ENCODE measurements at regions of chr1 and their contacts with region 1.

Region 1: GRCh38 chr1:145918144-145918992 is at the start of gene PEX11B:
- DNase-seq: peak; percentile 94 to 95 (median 94)
- ATAC-seq: peak; percentile 96
- H3K4me3 ChIP-seq: peak within 1 kb of the TSS; percentile 70
- H3K4me1 ChIP-seq: peaks cover 22% of the 10 kb centered on the region
- CTCF ChIP-seq: no peak
- total RNA-seq, gene PEX11B: 25.5 to 34.8 (median 33.3) TPM

Region 2: DNA sequence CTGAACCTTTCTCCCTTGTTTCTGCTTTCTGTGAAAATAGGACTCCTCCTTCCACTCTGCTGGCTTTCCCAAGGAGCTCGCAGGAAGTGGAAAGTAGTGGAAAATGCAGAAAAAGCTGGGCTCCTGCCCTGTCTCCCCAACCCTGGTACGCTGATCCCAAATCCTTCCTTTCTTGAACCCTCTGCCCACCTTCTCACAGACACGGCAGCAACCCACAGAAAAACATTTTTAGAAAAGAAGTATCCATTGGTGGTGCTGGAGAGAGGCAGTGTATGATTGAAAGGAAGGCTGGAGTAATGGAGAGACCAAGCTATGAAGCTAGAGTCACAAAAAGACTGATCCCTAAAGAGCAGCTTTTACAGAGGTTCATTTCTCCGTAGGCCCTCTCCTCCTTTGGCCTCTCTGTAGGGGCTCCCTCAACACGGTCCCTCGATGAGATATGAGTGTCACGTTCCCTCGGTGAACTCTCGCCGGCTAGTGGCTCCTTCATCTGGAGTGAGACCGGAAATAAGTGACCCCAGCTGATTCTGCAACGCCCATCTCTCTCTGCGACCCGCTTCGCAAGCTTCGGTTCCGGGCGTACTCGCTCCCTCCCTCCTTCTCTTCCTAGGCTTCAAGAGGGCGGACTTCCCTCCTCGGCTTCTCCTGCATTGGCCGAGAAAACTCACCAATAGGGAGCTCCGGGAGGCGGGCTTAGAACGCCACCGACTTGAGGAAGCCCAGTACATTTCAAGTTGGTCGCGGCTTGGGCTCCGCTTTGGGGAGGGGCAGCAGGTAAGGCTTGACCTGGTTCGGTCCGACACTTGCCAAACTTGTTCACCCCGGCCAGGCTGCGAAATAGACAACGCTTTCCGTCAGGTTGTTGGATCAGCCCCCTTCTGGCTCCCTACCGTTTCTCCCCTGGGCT is 45.9 kb after region 1 on chr1 and contains the starts of genes ANKRD34A and POLR3GL:
- intact Hi-C with region 1: loop called in 1 of 2 experiments (anchors 10 kb)
- DNase-seq: peak; percentile 96 to 98 (median 98)
- ATAC-seq: peak; percentile 94
- H3K4me3 ChIP-seq: peak within 1 kb of the TSS; percentile 16
- H3K4me1 ChIP-seq: peaks cover 39% of the 10 kb centered on the region
- CTCF ChIP-seq: no peak
- total RNA-seq, gene ANKRD34A: 0.14 to 0.63 (median 0.41) TPM
- total RNA-seq, gene POLR3GL: 15.7 to 26.8 (median 19.5) TPM

Region 3: DNA sequence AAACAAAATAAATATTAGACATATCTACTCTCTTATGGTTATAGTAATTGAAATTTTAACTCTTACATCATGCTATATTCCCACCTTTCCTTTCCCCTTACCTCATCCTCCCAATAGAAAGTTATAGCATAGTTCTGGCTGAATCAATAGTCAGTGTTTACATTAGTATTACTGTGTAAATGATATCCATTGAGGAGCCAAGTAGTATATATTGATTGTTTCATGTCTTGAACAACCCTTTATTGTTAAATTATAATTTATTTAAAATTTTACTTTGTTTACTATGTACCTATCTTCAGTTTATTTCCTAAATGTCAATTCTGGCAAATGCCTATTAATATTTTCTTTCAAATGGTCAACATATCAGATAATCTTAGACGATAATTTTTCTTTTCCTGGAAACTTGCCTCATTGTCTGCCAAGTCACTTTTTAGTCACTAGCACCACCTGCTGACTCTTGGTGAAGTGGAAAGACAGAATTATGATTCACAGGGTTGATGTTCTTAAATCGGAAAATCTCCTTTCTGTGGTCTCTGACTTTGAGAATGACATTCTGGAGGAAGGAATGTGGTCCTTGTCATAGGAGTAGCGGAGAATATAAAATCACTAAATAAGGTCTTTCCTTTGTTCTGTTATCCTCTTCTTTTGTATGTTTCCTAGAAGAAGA is 94.5 kb after region 1 on chr1:
- intact Hi-C with region 1: no loop called
- DNase-seq: peak in 1 of 3 donors; percentile 86
- ATAC-seq: peak; percentile 70
- H3K4me3 ChIP-seq: no peak overlapping the region
- H3K4me1 ChIP-seq: peaks cover 7% of the 10 kb centered on the region
- CTCF ChIP-seq: peak; percentile 36

Measured in mucosa of descending colon (tissue), 3 donors.